GM12878 (cell line): ENCODE measurements at regions of chr2 and their contacts with region 1.

Region 1: GRCh38 chr2:119862127-119862889 is 102.6 kb downstream of the PTPN4 start:
- DNase-seq: peak; percentile 52
- ATAC-seq: peak; percentile 92
- H3K4me3 ChIP-seq: 0 out of 2 replicates have a peak overlapping the region, but pooled peaks have one; percentile 31
- H3K27ac ChIP-seq: peak overlapping the region; percentile 64
- H3K4me1 ChIP-seq: peaks cover 22% of the 10 kb centered on the region; the same call in 1 of the 2 replicates
- H3K27me3 ChIP-seq: no peaks in the 10 kb centered on the region
- CTCF ChIP-seq: no peak
- EP300 ChIP-seq: peak in 1 of 2 experiments; percentile 29; a peak in 1 of 4 replicates
- POLR2A ChIP-seq: no peak
- RAD21 ChIP-seq: no peak

Region 2: DNA sequence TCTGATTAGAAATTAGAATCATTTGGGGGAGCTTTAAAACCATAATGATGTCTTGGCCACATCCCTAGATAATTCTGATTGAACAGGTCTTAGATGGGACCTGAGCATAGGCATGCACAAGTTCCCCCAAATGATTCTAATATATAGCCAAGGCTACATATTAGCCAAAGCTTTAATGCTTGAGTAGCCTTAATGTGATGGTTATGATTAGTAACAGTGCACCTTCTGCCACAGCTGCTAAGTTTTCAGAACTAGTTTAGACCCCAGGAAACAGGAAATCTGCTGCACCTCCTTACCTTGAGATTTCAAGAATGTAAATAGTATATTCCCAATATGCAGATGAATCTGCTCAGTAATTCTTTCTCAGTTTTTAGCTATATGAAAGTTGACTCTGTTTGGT is 17.2 kb after region 1 on chr2:
- CTCF ChIA-PET with region 1: interaction called, 6 read pairs
- POLR2A ChIA-PET with region 1: no interaction called
- RAD21 ChIA-PET with region 1: no interaction called
- SMC1A ChIA-PET with region 1: interaction called, 17 read pairs
- in situ Hi-C with region 1: no loop called
- intact Hi-C with region 1: no loop called
- DNase-seq: no peak
- ATAC-seq: peak; percentile 55
- H3K4me3 ChIP-seq: no peak overlapping the region
- H3K27ac ChIP-seq: no peak overlapping the region
- H3K4me1 ChIP-seq: no peaks in the 10 kb centered on the region
- H3K27me3 ChIP-seq: no peaks in the 10 kb centered on the region
- CTCF ChIP-seq: no peak
- EP300 ChIP-seq: no peak
- POLR2A ChIP-seq: no peak
- RAD21 ChIP-seq: no peak

Region 3: GRCh38 chr2:120012771-120013596 is 150.7 kb after region 1 on chr2 and contains the start of gene EPB41L5:
- CTCF ChIA-PET with region 1: no interaction called
- POLR2A ChIA-PET with region 1: no interaction called
- RAD21 ChIA-PET with region 1: no interaction called
- SMC1A ChIA-PET with region 1: interaction called, 4 read pairs
- in situ Hi-C with region 1: no loop called
- intact Hi-C with region 1: loop called (anchors 10 kb)
- DNase-seq: no peak
- ATAC-seq: peak; percentile 90
- H3K4me3 ChIP-seq: peak within 1 kb of the TSS; percentile 86
- H3K27ac ChIP-seq: peak within 1 kb of the TSS; percentile 64
- H3K4me1 ChIP-seq: peaks cover 5% of the 10 kb centered on the region; the same call in 1 of the 2 replicates
- H3K27me3 ChIP-seq: no peaks in the 10 kb centered on the region
- CTCF ChIP-seq: no peak
- EP300 ChIP-seq: no peak
- POLR2A ChIP-seq: peak; percentile 54; the same call in 1 of the 2 replicates
- RAD21 ChIP-seq: no peak
- polyA plus RNA-seq, gene EPB41L5: 2.1 to 2.9 TPM